ENCODE measurements at regions of chr11 and their contacts with region 1.

Region 1: DNA sequence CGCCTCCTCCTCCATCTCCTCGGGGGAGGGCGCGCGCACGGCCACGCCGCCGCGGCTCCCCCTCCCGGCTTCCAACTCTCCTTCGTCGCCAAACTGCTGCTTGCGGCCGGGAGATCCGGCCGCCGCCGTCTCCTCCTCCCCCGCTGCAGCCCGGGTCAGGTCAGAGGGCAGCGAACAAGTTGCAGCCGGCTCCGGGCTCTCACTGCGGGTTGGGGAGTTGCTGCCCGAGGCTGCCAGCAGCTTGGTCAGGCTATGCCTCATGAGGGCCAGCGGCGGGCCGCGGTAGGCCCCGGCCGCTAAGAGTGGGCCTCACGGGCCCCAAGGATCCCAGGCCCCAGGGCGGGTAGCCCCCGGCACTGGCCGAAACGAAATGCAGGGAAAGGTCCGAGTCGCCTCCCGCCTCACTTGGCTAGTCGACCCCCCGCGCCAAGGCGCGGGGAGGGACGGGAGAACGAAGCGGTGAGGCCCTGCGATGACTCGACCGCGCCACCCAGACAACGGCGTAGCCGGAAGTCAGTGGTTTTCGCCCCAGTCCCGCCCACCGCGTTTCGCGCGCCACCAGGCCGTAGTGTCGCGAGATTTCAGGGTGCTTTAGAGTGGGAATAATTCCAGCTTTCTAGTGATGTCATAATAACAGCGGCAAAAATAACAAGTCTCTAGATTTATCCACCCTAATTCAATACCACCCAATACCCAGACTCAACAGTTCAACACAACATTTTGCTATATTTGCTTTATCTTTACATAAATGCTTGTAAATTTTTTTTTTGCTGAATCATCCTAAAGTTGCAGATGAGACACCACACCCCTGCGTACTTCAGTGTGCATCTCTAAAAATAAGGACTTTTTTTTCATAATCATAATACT is at the start of gene CREBZF:
- DNase-seq: peak; percentile 97
- H3K4me3 Mint-ChIP-seq: peak within 1 kb of the TSS; percentile 99
- H3K27ac Mint-ChIP-seq: peak within 1 kb of the TSS; percentile 99
- H3K4me1 Mint-ChIP-seq: peaks cover 28% of the 10 kb centered on the region
- H3K27me3 Mint-ChIP-seq: no peaks in the 10 kb centered on the region
- total RNA-seq, gene CREBZF: 40.8 to 45.2 TPM

Region 2: DNA sequence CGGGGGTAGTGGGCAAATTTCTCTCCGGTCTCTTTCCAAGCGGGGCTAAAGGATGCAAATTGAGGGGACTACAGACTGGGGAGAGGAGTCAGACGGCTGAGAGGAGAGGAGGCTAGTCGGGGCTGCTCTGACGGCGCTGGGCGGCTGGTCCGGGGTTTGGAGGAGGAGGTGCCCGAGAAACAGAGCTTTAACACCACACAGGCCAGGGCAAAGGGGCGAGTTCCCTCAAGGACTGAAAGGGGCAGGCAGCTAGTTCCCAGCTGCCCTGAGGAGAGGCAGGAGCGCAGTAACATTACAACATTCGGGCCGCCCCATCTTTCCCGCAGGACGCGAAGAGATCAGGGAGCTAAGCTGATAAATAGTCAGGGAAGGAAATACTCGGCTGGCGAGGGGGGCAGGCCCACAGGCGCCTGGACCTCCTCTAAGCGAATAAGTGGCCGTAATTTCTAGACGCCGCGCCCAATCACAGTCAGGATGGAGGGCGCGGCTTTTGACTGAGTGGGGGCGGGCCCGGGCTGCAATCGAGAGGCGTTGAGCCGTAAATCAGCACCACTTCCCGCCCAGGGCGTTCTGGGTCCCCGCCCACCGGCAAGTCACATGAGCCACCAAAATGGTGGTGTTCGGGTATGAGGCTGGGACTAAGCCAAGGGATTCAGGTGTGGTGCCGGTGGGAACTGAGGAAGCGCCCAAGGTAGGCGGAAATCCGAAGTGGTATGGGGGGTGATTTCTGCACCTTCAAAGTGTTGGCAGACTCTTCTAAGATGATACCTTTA is 36.7 kb before region 1 on chr11 and contains the start of gene TMEM126B:
- CTCF ChIA-PET with region 1: interaction called, 10 read pairs
- POLR2A ChIA-PET with region 1: interaction called, 10 read pairs
- intact Hi-C with region 1: loop called (anchors 1 kb)
- DNase-seq: peak; percentile 98
- H3K4me3 Mint-ChIP-seq: peak within 1 kb of the TSS; percentile 100
- H3K27ac Mint-ChIP-seq: peak within 1 kb of the TSS; percentile 99
- H3K4me1 Mint-ChIP-seq: peaks cover 38% of the 10 kb centered on the region
- H3K27me3 Mint-ChIP-seq: no peaks in the 10 kb centered on the region
- total RNA-seq, gene TMEM126B: 59.8 to 64.5 TPM

Region 3: GRCh38 chr11:85699957-85700741 is 35.3 kb after region 1 on chr11:
- CTCF ChIA-PET with region 1: no interaction called
- POLR2A ChIA-PET with region 1: no interaction called
- intact Hi-C with region 1: loop called (anchors 1 kb)
- DNase-seq: no peak
- H3K4me3 Mint-ChIP-seq: no peak overlapping the region
- H3K27ac Mint-ChIP-seq: peak overlapping the region; percentile 63
- H3K4me1 Mint-ChIP-seq: peaks cover 34% of the 10 kb centered on the region
- H3K27me3 Mint-ChIP-seq: no peaks in the 10 kb centered on the region

Region 4: GRCh38 chr11:85826116-85826855 is 161.4 kb after region 1 on chr11:
- CTCF ChIA-PET with region 1: interaction called, 4 read pairs
- POLR2A ChIA-PET with region 1: interaction called, 3 read pairs
- intact Hi-C with region 1: loop called (anchors 10 kb)
- DNase-seq: peak; percentile 41
- H3K4me3 Mint-ChIP-seq: no peak overlapping the region
- H3K27ac Mint-ChIP-seq: peak overlapping the region; percentile 9
- H3K4me1 Mint-ChIP-seq: peaks cover 71% of the 10 kb centered on the region
- H3K27me3 Mint-ChIP-seq: no peaks in the 10 kb centered on the region

Region 5: DNA sequence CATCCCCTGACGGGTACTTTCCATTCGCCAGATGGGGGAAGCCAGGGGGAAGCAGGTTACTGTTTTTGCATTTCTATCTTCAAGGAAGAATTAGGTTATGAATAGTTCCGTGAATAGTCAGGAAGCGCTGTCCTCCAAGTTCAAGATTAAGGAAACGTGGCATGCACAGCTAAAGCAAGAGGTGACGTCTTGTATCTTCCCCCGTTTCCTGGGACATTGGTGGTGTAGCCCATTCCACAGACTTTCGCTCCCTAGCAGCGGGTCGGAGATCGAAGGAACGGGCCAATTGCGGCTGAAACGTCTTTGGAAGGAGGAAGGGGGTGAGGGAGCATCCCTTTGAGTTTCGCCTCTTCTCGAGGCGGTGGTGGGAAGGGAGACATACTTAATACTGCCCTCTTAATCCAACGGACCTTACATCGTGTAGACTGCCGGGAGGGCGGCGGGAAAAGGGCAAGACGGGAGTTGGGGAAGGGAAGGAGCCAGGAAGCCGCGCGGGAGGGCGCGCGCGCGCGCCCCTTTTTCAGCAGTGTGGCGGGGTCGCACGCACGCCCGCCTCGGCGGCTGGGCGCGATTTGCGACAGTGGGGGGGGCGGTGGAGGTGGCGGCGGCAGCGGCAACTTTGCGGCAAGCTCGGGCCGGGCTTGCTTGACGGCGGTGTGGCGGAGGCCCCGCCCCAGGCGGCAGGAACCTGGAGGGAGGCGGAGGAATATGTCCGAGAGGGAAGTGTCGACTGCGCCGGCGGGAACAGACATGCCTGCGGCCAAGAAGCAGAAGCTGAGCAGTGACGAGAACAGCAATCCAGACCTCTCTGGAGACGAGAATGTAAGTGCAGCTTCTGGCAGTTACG is 579.9 kb after region 1 on chr11 and contains the start of gene EED:
- CTCF ChIA-PET with region 1: no interaction called
- POLR2A ChIA-PET with region 1: no interaction called
- intact Hi-C with region 1: loop called (anchors 1 kb)
- DNase-seq: peak; percentile 96
- H3K4me3 Mint-ChIP-seq: no peak within 1 kb of the TSS
- H3K27ac Mint-ChIP-seq: no peak within 1 kb of the TSS
- H3K4me1 Mint-ChIP-seq: peaks cover 33% of the 10 kb centered on the region
- H3K27me3 Mint-ChIP-seq: no peaks in the 10 kb centered on the region
- total RNA-seq, gene EED: 170 TPM

Region 6: DNA sequence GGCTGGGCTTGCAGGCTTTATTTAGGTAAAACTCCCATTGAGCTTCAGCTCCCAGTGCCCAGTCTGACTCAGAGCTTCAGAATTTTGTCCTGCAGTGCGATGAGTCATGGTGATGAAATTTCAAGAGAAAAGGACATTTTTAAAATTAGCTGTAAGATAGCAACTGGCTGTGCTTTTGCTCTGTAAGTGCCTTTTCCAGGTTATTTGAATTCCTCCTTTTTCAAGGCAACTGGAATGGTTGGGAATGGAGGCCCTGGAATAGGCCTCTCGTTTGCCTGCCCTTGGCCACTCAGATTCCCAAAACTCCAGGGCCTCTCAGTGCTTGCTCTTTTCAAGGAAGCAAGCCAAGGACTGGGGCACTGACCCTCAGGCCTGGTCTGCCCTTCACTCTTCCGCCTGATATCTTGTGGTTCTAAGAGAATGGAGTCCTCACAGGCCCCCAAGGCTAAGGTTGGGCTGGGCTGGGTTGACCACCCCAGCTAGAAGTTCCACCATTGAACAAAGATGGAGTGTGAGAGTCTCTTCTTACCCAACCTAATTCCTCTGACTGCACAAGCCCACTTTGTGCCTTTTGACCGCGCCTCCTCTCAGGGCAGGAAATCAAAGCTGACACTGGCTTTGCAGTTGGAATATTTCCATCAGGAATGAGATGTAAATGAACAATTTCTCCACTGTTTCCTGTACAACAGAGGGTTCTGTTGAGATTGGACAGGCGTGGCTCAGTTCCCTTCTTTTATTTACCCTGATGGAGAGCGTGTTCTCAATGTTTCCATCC is 1076.0 kb after region 1 on chr11:
- CTCF ChIA-PET with region 1: no interaction called
- POLR2A ChIA-PET with region 1: no interaction called
- intact Hi-C with region 1: loop called (anchors 2 kb)
- DNase-seq: peak; percentile 55
- H3K4me3 Mint-ChIP-seq: no peak overlapping the region
- H3K27ac Mint-ChIP-seq: no peak overlapping the region
- H3K4me1 Mint-ChIP-seq: peaks cover 19% of the 10 kb centered on the region
- H3K27me3 Mint-ChIP-seq: peaks cover 4% of the 10 kb centered on the region